ENCODE measurements at regions of chr7 and their contacts with region 1.

Region 1: GRCh38 chr7:17991866-17992648 is 35.6 kb downstream of the PRPS1L1 start:
- DNase-seq: peak; percentile 58
- H3K4me3 Mint-ChIP-seq: no peak overlapping the region
- H3K27ac Mint-ChIP-seq: no peak overlapping the region
- H3K4me1 Mint-ChIP-seq: peaks cover 2% of the 10 kb centered on the region
- H3K27me3 Mint-ChIP-seq: peaks cover 6% of the 10 kb centered on the region

Region 2: DNA sequence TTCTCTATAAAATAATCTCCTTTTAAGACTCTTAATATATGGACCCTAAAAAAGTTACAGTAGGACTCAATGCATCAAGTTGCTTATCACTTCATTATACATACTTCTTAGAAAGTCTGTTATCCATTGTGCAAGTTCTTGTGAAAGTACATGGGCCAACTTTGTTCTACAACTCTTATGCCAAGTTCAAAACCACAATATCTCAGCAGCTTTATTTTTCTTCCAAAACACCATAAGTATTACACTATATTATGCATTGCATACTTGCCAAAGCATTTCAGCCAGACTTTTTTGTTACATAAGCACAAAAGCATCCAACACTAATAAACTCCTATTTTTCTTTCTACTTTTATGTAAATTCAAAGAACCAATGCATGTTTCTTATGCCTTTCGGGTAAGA is 599.2 kb before region 1 on chr7:
- CTCF ChIA-PET with region 1: no interaction called
- intact Hi-C with region 1: no loop called
- DNase-seq: no peak
- H3K4me3 Mint-ChIP-seq: no peak overlapping the region
- H3K27ac Mint-ChIP-seq: no peak overlapping the region
- H3K4me1 Mint-ChIP-seq: no peaks in the 10 kb centered on the region
- H3K27me3 Mint-ChIP-seq: peaks cover 5% of the 10 kb centered on the region

Region 3: DNA sequence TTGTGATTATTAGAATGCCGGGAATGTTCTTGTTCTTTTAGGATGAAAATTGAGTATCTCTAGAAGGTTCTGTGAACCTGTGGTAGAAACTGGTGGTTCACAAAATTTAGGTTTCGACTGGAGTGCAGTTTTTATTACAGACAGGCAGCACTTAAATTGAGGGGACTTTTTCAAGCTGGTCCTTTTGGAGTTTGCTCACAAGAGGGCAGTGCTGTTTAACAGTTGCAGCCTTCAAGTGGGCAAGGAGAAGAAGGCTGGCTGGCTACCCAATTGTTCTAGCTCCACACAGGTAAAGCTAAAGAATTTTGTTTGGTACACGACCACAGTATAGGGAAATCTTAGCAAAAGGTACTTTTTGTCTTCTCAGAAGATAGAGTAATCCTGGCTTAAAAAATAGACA is 285.3 kb before region 1 on chr7:
- CTCF ChIA-PET with region 1: interaction called, 3 read pairs
- intact Hi-C with region 1: loop called (anchors 2 kb)
- DNase-seq: peak; percentile 61
- H3K4me3 Mint-ChIP-seq: no peak overlapping the region
- H3K27ac Mint-ChIP-seq: no peak overlapping the region
- H3K4me1 Mint-ChIP-seq: no peaks in the 10 kb centered on the region
- H3K27me3 Mint-ChIP-seq: no peaks in the 10 kb centered on the region

Region 4: DNA sequence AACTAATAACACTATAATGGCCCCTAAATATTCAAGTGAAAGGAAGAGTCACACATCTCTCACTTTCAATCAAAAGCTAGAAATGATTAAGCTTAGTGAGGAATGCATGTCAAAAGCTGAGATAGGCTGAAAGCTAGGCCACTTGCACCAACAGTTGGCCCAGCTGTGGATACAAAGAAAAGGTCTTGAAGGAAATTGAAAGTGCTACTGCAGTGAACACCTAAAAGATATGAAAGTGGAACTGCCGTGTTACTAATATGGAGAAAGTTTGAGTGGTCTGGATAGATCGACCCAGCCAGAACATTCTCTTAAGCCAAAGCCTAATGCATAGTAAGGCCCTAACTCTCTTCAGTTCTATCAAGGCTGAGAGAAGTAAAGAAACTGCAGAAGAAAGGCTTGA is 39.7 kb before region 1 on chr7:
- CTCF ChIA-PET with region 1: interaction called, 5 read pairs
- intact Hi-C with region 1: loop called (anchors 2 kb)
- DNase-seq: peak; percentile 49
- H3K4me3 Mint-ChIP-seq: no peak overlapping the region
- H3K27ac Mint-ChIP-seq: no peak overlapping the region
- H3K4me1 Mint-ChIP-seq: peaks cover 19% of the 10 kb centered on the region
- H3K27me3 Mint-ChIP-seq: peaks cover 9% of the 10 kb centered on the region

Measured in activated naive CD4-positive, alpha-beta T cell treated with anti-CD3 and anti-CD28 coated beads for 36 hours (primary cell).